Activated CD8-positive, alpha-beta memory T cell treated with anti-CD3 and anti-CD28 coated beads, Interleukin-2, amount 10 ng/mL, durations not matched to agents 7 days and 5 days (primary cell): ENCODE measurements at regions of chr19 and their contacts with region 1.

Region 1: GRCh38 chr19:6372594-6373095 is at the start of gene ALKBH7:
- DNase-seq: peak; percentile 99
- ATAC-seq: peak; percentile 84
- H3K4me3 Mint-ChIP-seq: peak within 1 kb of the TSS; percentile 75
- H3K27ac Mint-ChIP-seq: peak within 1 kb of the TSS; percentile 93
- H3K4me1 Mint-ChIP-seq: peaks cover 17% of the 10 kb centered on the region
- H3K27me3 Mint-ChIP-seq: no peaks in the 10 kb centered on the region
- total RNA-seq, gene ALKBH7: 31.9 to 45.8 TPM

Region 2: GRCh38 chr19:6312018-6312417 is 60.6 kb before region 1 on chr19:
- CTCF ChIA-PET with region 1: no interaction called
- DNase-seq: no peak
- ATAC-seq: no peak
- H3K4me3 Mint-ChIP-seq: no peak overlapping the region
- H3K27ac Mint-ChIP-seq: no peak overlapping the region
- H3K4me1 Mint-ChIP-seq: no peaks in the 10 kb centered on the region
- H3K27me3 Mint-ChIP-seq: no peaks in the 10 kb centered on the region

Region 3: DNA sequence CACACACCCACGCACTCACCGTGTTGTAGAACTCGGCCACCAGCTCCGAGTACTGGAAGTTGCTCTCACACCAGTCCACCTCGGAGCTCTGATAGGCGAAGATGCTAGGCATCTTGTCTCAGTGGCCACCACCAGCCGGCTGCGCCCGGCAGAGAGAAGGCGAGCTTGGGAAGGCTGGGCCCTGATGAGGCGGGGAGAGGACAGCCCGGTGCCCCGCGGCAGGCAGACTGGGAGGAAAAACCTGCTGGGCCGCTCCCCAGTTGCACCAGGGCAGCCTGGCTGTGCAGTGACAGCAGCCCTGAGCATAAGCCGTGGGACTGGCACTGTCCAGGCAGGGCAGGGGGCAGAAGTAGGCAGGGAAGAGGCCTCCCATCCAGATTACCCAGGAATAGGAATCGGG is 39.2 kb before region 1 on chr19 and contains the start of gene ACER1:
- CTCF ChIA-PET with region 1: no interaction called
- DNase-seq: no peak
- ATAC-seq: no peak
- H3K4me3 Mint-ChIP-seq: no peak within 1 kb of the TSS
- H3K27ac Mint-ChIP-seq: no peak within 1 kb of the TSS
- H3K4me1 Mint-ChIP-seq: no peaks in the 10 kb centered on the region
- H3K27me3 Mint-ChIP-seq: no peaks in the 10 kb centered on the region
- total RNA-seq, gene ACER1: 0.26 TPM in 1 of 2 experiments, not detected in the other

Region 4: DNA sequence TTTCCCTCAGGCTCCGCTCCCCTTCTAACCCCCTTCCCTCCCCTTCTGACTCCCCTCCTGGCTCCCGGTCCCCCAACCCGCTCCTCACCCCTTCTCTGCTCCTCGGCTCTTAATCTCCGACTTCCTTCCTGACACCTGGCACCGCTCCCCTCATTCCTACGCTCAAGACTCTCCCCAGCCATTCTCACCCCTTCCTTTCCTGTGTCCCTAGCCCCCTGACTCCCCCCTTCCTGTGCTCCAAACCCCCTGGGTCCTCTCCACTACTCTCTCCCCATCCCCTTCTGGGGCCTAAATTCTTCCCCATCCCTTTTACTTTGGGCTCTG is 10.7 kb before region 1 on chr19:
- CTCF ChIA-PET with region 1: interaction called, 11 read pairs
- DNase-seq: no peak
- ATAC-seq: no peak
- H3K4me3 Mint-ChIP-seq: peak overlapping the region; percentile 80
- H3K27ac Mint-ChIP-seq: peak overlapping the region; percentile 86
- H3K4me1 Mint-ChIP-seq: peaks cover 15% of the 10 kb centered on the region
- H3K27me3 Mint-ChIP-seq: no peaks in the 10 kb centered on the region

Region 5: GRCh38 chr19:6424939-6425731 is 52.5 kb after region 1 on chr19:
- CTCF ChIA-PET with region 1: interaction called, 10 read pairs
- DNase-seq: peak; percentile 100
- ATAC-seq: peak; percentile 88
- H3K4me3 Mint-ChIP-seq: peak overlapping the region; percentile 65
- H3K27ac Mint-ChIP-seq: peak overlapping the region; percentile 92
- H3K4me1 Mint-ChIP-seq: peaks cover 36% of the 10 kb centered on the region
- H3K27me3 Mint-ChIP-seq: no peaks in the 10 kb centered on the region